ENCODE measurements at regions of chr2 and their contacts with region 1.

Region 1: DNA sequence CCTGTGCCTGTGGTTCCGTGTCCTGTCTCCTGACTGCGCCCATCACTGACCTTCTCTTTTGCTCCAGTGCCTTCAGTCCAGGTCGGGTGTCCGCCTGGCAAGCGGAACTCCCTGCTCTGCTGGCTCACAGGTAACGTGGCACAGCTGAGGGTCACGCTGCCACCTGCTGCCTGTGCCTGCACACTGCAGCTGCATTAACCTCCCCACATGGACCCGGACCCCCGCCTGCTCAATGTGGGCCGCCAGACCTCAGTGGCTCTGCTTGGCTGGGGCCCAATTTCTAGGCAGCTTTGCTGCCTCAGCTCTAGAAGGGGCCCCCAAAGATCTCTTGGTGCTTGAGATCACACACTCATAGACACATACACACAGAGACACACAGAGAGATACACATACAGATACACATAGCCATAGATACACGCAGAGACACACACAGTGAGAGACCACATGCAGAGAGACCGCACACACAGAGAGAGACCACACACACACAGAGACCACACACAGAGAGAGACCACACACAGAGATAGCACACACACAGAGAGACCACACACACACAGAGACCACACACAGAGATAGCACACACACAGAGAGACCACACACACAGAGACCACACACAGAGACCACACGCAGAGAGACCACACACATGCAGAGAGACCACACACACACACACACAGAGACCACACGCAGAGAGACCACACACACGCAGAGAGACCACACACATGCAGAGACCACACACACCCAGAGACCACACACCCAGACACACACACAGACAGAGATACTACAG is 14.9 kb upstream of the CNNM3 start:
- DNase-seq: peak; percentile 65 to 94 (median 81)
- ATAC-seq: peak; percentile 94 to 100 (median 99)
- H3K4me3 ChIP-seq: no peak overlapping the region
- H3K27ac ChIP-seq: no peak overlapping the region
- H3K4me1 ChIP-seq: no peaks in the 10 kb centered on the region
- H3K27me3 ChIP-seq: no peaks in the 10 kb centered on the region
- CTCF ChIP-seq: peak; percentile 72 to 86 (median 84)

Region 2: GRCh38 chr2:96396095-96396494 is 405.1 kb before region 1 on chr2:
- intact Hi-C with region 1: no loop called
- DNase-seq: no peak
- ATAC-seq: peak in 2 of 4 donors; percentile 29 to 53
- H3K4me3 ChIP-seq: no peak overlapping the region
- H3K27ac ChIP-seq: no peak overlapping the region
- H3K4me1 ChIP-seq: no peaks in the 10 kb centered on the region
- H3K27me3 ChIP-seq: no peaks in the 10 kb centered on the region
- CTCF ChIP-seq: no peak

Region 3: DNA sequence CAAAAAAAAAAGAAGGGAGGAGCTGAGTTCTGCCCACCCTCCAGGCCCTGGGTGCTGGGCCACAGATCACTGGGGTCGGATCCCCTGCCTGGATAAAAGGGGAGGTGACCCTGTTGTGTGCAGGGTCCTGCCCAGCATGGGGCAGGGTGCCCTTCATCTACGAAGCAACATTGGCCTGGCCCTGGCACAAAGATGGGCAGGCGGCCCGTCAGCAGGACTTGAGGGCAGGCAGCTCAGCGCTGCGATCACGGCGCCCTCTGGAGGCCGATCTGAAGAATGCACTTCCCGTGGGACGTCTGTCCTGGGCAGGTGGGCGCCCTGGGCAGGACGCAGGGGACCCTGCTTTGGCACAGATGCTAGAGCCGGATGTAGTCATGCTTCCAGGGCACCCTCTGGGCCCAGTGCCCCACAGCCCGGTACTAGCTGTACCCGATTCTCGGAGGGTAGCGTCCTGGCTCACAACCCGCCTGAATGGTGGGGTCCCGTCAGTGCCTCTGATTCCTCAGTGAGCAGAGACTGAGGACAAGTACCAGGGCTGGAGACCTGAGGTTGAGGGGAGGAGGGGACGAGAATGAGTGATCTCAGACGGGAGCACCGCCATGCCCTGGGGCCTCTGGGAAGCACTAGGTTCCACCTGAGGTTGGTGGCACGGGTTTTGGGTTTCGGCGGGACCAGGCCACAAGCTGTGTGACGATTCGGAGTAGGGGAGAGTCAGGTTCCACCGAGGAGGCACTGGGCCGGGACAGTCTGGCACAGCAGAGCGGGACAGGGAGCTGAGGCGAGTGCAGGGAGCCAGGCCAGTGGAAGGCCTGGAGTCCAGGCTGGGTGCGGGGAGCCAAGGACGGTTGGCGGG is 246.7 kb before region 1 on chr2:
- intact Hi-C with region 1: loop called in 1 of 3 experiments (anchors 5 kb)
- DNase-seq: peak in 5 of 6 donors; percentile 48 to 89 (median 74)
- ATAC-seq: peak; percentile 32 to 73 (median 66)
- H3K4me3 ChIP-seq: no peak overlapping the region
- H3K27ac ChIP-seq: no peak overlapping the region
- H3K4me1 ChIP-seq: no peaks in the 10 kb centered on the region
- H3K27me3 ChIP-seq: no peaks in the 10 kb centered on the region
- CTCF ChIP-seq: peak; percentile 87 to 97 (median 92)

Region 4: GRCh38 chr2:96608469-96609455 is 192.4 kb before region 1 on chr2:
- intact Hi-C with region 1: loop called in 1 of 3 experiments (anchors 10 kb)
- DNase-seq: peak in 1 of 6 donors; percentile 53
- ATAC-seq: peak in 2 of 4 donors; percentile 27 to 28
- H3K4me3 ChIP-seq: no peak overlapping the region
- H3K27ac ChIP-seq: no peak overlapping the region
- H3K4me1 ChIP-seq: peaks cover 0 to 18% (median 17%) of the 10 kb centered on the region in 3 donors
- H3K27me3 ChIP-seq: no peaks in the 10 kb centered on the region
- CTCF ChIP-seq: no peak